ENCODE measurements at regions of chr6 and their contacts with region 1.

Region 1: GRCh38 chr6:27503436-27504030 is 30.6 kb upstream of the ZNF184 start:
- DNase-seq: peak; percentile 88
- ATAC-seq: peak; percentile 61
- H3K4me3 ChIP-seq: peak overlapping the region; percentile 67 to 74
- H3K27ac ChIP-seq: peak overlapping the region; percentile 64
- H3K4me1 ChIP-seq: peaks cover 32% of the 10 kb centered on the region
- H3K27me3 ChIP-seq: peaks cover 2% of the 10 kb centered on the region; the same call in 1 of the 2 replicates
- CTCF ChIP-seq: no peak

Region 2: GRCh38 chr6:27479319-27480182 is 24.0 kb before region 1 on chr6:
- CTCF ChIA-PET with region 1: no interaction called
- POLR2A ChIA-PET with region 1: no interaction called
- in situ Hi-C with region 1: no loop called
- intact Hi-C with region 1: loop called (anchors 2 kb)
- DNase-seq: peak; percentile 87
- ATAC-seq: peak; percentile 77
- H3K4me3 ChIP-seq: peak overlapping the region; percentile 98 to 100
- H3K27ac ChIP-seq: peak overlapping the region; percentile 93
- H3K4me1 ChIP-seq: peaks cover 9% of the 10 kb centered on the region
- H3K27me3 ChIP-seq: no peaks in the 10 kb centered on the region
- CTCF ChIP-seq: no peak

Region 3: GRCh38 chr6:27601668-27602254 is 98.2 kb after region 1 on chr6:
- CTCF ChIA-PET with region 1: no interaction called
- POLR2A ChIA-PET with region 1: interaction called, 10 read pairs
- in situ Hi-C with region 1: no loop called
- intact Hi-C with region 1: no loop called
- DNase-seq: peak; percentile 88
- ATAC-seq: peak; percentile 71
- H3K4me3 ChIP-seq: peak overlapping the region; percentile 54 to 79
- H3K27ac ChIP-seq: no peak overlapping the region
- H3K4me1 ChIP-seq: peaks cover 4% of the 10 kb centered on the region; the same call in 1 of the 2 replicates
- H3K27me3 ChIP-seq: peaks cover 5% of the 10 kb centered on the region; the same call in 1 of the 2 replicates
- CTCF ChIP-seq: no peak

Region 4: DNA sequence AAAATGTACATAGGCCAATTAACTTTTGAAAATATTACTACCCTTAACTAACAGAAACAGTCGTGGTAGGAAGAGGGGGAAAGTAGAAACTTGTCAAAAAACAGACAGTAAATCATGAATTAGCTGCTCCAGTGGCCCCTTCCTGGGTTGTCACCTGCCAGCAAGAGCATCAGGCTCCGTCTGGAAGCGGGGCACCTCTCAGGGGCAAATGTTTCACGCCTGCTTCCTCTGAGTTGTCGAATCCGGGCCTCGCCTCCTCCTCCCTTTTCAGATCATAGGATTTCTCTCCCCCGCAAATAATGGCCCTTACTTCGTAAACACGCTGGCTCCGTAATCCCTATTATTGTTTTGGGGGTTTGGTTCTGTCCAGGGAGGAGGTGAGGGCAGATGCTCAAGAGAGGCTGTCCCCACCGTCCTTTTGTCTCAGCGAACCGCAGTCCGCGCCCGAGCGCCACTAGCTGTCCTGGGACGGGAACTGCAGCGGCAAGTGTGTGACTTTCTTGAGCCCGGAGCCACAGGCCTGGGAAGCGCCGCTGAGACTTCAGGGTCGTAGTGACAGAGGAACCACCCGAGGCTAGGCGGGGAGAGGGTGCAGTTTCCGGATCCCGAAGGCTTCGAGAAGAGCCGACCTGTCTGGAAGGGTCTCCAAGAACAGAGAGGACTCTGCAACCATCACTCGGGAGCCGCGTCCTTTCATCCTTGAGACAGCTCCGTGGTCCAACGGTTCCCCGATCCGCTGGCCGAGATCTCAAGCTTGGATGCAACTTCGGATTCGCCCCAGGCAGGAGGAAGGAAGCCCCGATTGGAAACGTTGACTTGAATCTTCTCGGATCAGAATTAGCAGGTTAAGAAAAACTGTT is 183.9 kb after region 1 on chr6:
- CTCF ChIA-PET with region 1: no interaction called
- POLR2A ChIA-PET with region 1: no interaction called
- in situ Hi-C with region 1: no loop called
- intact Hi-C with region 1: loop called (anchors 10 kb)
- DNase-seq: peak; percentile 85
- ATAC-seq: peak; percentile 81
- H3K4me3 ChIP-seq: peak overlapping the region; percentile 66 to 76
- H3K27ac ChIP-seq: peak overlapping the region; percentile 82
- H3K4me1 ChIP-seq: no peaks in the 10 kb centered on the region
- H3K27me3 ChIP-seq: no peaks in the 10 kb centered on the region
- CTCF ChIP-seq: peak; percentile 93

Region 5: GRCh38 chr6:27772261-27773001 is 268.9 kb after region 1 on chr6:
- CTCF ChIA-PET with region 1: interaction called, 10 read pairs
- POLR2A ChIA-PET with region 1: no interaction called
- in situ Hi-C with region 1: no loop called
- intact Hi-C with region 1: no loop called
- DNase-seq: peak; percentile 75
- ATAC-seq: peak; percentile 98
- H3K4me3 ChIP-seq: peak overlapping the region; percentile 35 to 65
- H3K27ac ChIP-seq: peak overlapping the region; percentile 59
- H3K4me1 ChIP-seq: peaks cover 13% of the 10 kb centered on the region
- H3K27me3 ChIP-seq: no peaks in the 10 kb centered on the region
- CTCF ChIP-seq: peak; percentile 97

Region 6: DNA sequence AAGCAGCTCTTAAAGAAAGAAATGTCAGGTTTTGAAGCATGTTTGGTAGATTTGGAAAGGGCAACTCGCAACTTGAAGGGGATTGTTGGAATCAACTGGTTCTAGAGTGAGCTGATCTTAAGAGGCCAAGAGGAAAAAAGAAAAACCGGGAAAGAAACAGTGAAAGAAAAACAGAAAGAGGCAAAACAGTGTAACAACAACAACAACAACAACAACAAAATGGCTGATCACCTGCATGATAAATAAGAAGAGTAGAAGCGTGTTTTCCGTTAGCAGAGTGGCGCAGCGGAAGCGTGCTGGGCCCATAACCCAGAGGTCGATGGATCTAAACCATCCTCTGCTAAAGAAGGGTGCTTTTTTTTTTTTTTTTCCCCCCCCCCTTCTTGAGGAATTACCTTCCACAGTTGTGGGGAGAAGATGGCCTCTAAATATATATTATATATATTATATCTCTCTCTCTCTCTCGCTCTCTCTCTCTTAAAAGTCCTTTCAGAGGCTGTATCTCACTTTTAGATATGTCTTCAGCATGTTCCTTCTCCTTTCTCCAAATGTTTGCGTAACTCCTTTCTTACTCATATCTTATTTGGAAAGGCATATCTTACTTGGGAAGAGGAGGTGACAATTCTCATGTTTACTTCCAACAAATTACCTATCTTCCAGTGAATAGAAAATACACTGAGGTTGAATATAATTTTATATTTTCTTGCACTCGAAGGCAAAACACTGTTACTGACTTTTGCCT is 274.3 kb after region 1 on chr6:
- CTCF ChIA-PET with region 1: interaction called, 10 read pairs
- POLR2A ChIA-PET with region 1: no interaction called
- in situ Hi-C with region 1: no loop called
- intact Hi-C with region 1: no loop called
- DNase-seq: peak; percentile 68
- ATAC-seq: peak; percentile 88
- H3K4me3 ChIP-seq: peak overlapping the region; percentile 48 to 68
- H3K27ac ChIP-seq: peak overlapping the region; percentile 77
- H3K4me1 ChIP-seq: peaks cover 6% of the 10 kb centered on the region
- H3K27me3 ChIP-seq: no peaks in the 10 kb centered on the region
- CTCF ChIP-seq: no peak